AG04450 (cell line): ENCODE measurements at regions of chr9 and their contacts with region 1.

Region 1: DNA sequence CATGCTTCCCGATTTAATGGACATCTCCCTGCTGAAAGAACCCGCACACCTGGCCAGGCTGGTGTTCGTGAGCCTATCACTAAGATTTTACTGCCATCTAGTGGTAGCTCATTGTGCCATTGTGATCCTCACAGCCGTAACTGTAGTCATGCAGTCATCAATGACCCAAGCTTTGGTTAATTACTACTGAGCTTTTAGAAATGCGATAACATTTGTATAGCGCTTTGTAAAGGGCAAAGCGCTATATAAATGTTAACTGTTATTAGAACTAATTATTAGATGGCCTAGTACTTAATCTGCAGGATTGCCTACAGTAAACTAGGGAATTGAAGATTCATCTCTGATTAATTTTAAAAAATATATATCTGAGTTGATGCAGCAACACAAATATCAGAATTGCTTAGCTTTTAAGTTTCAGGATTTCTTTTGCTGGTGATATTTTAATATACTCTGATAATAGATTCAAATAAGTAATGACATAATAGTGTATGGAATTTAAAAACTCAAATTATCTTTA is 90.2 kb downstream of the HACD4 start:
- DNase-seq: peak; percentile 36
- H3K4me3 ChIP-seq: no peak overlapping the region
- H3K27ac ChIP-seq: no peak overlapping the region
- H3K27me3 ChIP-seq: no peaks in the 10 kb centered on the region
- CTCF ChIP-seq: peak; percentile 88

Region 2: GRCh38 chr9:19925817-19926503 is 1015.3 kb before region 1 on chr9:
- CTCF ChIA-PET with region 1: interaction called, 15 read pairs
- POLR2A ChIA-PET with region 1: no interaction called
- DNase-seq: peak; percentile 55
- H3K4me3 ChIP-seq: peak overlapping the region; percentile 65
- H3K27ac ChIP-seq: no peak overlapping the region
- H3K27me3 ChIP-seq: no peaks in the 10 kb centered on the region
- CTCF ChIP-seq: peak; percentile 98

Region 3: DNA sequence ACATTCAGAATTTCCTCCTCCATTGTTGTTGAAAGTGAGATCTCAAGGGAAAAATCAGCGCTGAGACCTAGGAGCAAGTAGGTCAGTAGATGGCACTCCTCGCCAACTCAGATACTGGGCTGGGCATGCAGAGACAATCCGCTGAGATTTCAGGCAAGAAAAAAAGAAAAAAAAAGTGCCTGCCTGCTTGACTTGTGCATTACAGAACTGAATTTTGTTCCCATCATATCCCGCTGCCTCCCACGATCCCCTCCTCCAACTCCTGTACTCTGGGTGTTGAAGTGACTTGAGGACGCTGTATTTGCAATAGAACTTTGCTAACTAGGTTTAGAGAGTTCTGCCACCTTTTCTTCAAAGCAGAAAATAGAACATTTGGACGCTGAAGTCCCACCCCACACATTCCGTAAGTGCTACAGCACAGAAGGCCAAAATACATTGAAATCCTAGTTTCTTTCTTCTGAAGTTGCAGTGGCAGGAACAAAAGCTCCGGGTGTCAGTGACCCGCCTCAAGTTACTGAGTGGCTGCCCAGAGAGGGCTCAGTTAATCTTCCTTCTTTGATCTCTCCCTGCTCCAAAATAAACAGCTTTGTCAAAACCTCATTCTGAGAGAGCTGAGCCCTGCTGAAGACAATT is 584.7 kb before region 1 on chr9:
- CTCF ChIA-PET with region 1: interaction called, 23 read pairs
- POLR2A ChIA-PET with region 1: no interaction called
- DNase-seq: peak; percentile 69
- H3K4me3 ChIP-seq: no peak overlapping the region
- H3K27ac ChIP-seq: peak overlapping the region; percentile 53
- H3K27me3 ChIP-seq: no peaks in the 10 kb centered on the region
- CTCF ChIP-seq: peak; percentile 70

Region 4: GRCh38 chr9:20611751-20612287 is 329.4 kb before region 1 on chr9:
- CTCF ChIA-PET with region 1: interaction called, 17 read pairs
- POLR2A ChIA-PET with region 1: no interaction called
- DNase-seq: no peak
- H3K4me3 ChIP-seq: peak overlapping the region; percentile 7; the same call in 1 of the 2 replicates
- H3K27ac ChIP-seq: no peak overlapping the region
- H3K27me3 ChIP-seq: no peaks in the 10 kb centered on the region
- CTCF ChIP-seq: peak; percentile 57

Region 5: GRCh38 chr9:20658677-20659473 is 282.4 kb before region 1 on chr9:
- CTCF ChIA-PET with region 1: no interaction called
- POLR2A ChIA-PET with region 1: no interaction called
- DNase-seq: no peak
- H3K4me3 ChIP-seq: peak overlapping the region; percentile 18
- H3K27ac ChIP-seq: no peak overlapping the region
- H3K27me3 ChIP-seq: peaks cover 3% of the 10 kb centered on the region
- CTCF ChIP-seq: no peak

Region 6: GRCh38 chr9:20884985-20885593 is 56.1 kb before region 1 on chr9:
- CTCF ChIA-PET with region 1: interaction called, 41 read pairs
- POLR2A ChIA-PET with region 1: no interaction called
- DNase-seq: peak; percentile 10
- H3K4me3 ChIP-seq: no peak overlapping the region
- H3K27ac ChIP-seq: no peak overlapping the region
- H3K27me3 ChIP-seq: no peaks in the 10 kb centered on the region
- CTCF ChIP-seq: peak; percentile 64

Region 7: GRCh38 chr9:20929276-20929675 is 12.0 kb before region 1 on chr9:
- CTCF ChIA-PET with region 1: interaction called, 42 read pairs
- POLR2A ChIA-PET with region 1: no interaction called
- DNase-seq: no peak
- H3K4me3 ChIP-seq: no peak overlapping the region
- H3K27ac ChIP-seq: no peak overlapping the region
- H3K27me3 ChIP-seq: no peaks in the 10 kb centered on the region
- CTCF ChIP-seq: no peak

Region 8: GRCh38 chr9:21110708-21111576 is 169.7 kb after region 1 on chr9:
- CTCF ChIA-PET with region 1: interaction called, 71 read pairs
- POLR2A ChIA-PET with region 1: no interaction called
- DNase-seq: peak; percentile 56
- H3K4me3 ChIP-seq: no peak overlapping the region
- H3K27ac ChIP-seq: no peak overlapping the region
- H3K27me3 ChIP-seq: no peaks in the 10 kb centered on the region
- CTCF ChIP-seq: peak; percentile 91